Activated T-helper 2 cell treated with anti-CD3 and anti-CD28 coated beads, Interferon-gamma antibody, Interleukin-2, Interleukin-4, amounts not matched to agents 10 μg/mL and 5 μg/mL and 100 μg/mL, durations not matched to agents 14 hours and 24 hours and 36 hours (primary cell): ENCODE measurements at regions of chr5 and their contacts with region 1.

Region 1: GRCh38 chr5:109865637-109866036 is 175.9 kb downstream of the MAN2A1 start:
- DNase-seq: no peak
- H3K4me3 Mint-ChIP-seq: no peak overlapping the region
- H3K27ac Mint-ChIP-seq: no peak overlapping the region
- H3K4me1 Mint-ChIP-seq: peaks cover 34% of the 10 kb centered on the region
- H3K27me3 Mint-ChIP-seq: no peaks in the 10 kb centered on the region

Region 2: GRCh38 chr5:109885205-109885604 is 19.6 kb after region 1 on chr5:
- intact Hi-C with region 1: no loop called
- DNase-seq: no peak
- H3K4me3 Mint-ChIP-seq: no peak overlapping the region
- H3K27ac Mint-ChIP-seq: no peak overlapping the region
- H3K4me1 Mint-ChIP-seq: no peaks in the 10 kb centered on the region
- H3K27me3 Mint-ChIP-seq: no peaks in the 10 kb centered on the region

Region 3: GRCh38 chr5:110054240-110054639 is 188.6 kb after region 1 on chr5:
- intact Hi-C with region 1: loop called (anchors 5 kb)
- DNase-seq: peak; percentile 68
- H3K4me3 Mint-ChIP-seq: no peak overlapping the region
- H3K27ac Mint-ChIP-seq: peak overlapping the region; percentile 82
- H3K4me1 Mint-ChIP-seq: peaks cover 28% of the 10 kb centered on the region
- H3K27me3 Mint-ChIP-seq: no peaks in the 10 kb centered on the region

Region 4: DNA sequence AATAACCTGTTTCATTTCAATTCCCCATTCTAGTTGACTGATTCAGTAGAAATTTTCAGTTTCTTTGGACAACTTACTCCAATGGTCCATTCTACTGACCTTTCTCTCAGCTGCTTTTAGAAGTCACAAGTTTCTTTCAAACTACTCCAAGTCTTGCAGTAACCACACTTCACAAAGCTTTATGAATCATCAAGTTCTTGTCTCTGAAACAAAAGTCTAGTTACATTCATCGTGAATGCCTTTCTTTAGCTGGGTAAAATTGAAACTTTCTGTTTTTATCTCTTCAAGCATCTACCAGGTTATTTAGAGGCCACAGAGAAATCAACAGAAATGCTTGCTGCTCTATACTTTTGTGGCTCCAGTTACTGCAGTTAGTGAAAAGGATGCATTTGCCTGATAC is 455.5 kb after region 1 on chr5:
- intact Hi-C with region 1: loop called (anchors 10 kb)
- DNase-seq: no peak
- H3K4me3 Mint-ChIP-seq: no peak overlapping the region
- H3K27ac Mint-ChIP-seq: no peak overlapping the region
- H3K4me1 Mint-ChIP-seq: peaks cover 16% of the 10 kb centered on the region
- H3K27me3 Mint-ChIP-seq: no peaks in the 10 kb centered on the region